ENCODE measurements at regions of chr22 and their contacts with region 1.

Region 1: DNA sequence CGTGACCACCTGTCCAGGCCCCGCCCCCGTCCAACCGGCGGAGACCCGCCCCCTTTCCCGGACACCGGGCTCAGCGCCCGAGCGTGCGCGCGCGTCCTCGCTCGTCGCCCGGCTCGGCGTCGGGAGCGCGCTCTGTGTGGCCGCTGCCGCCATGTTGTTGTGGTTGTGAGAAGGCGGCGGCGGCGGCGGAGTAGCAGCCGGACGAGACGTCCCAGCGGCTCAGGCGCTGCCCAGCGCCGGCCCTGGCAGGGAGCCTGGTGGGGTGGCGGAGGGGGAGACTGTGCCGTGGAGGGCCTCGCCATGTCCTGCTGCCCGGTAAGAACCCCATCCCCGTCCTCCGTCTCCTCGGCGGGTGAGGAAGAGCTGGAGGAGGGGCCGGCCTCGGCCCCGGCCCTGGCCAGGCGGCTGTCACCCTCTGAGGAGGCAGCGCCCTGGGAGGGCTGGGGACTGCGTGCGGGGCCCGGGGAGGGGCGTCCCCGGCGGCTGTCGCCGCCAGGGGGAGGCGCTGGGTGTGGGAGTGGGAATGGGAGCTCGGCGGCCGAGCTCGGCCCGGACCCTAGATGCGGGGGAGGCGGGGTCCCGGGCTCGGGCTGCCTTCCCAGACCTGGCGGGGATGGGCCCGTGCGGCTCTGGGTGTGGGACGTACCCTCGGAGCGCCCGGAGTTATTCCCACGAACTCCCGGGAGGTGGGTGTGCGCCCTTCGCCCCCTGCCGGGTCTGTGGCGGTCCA is at the start of gene MTMR3:
- DNase-seq: peak; percentile 92 to 98 (median 97)
- H3K4me3 ChIP-seq: peak within 1 kb of the TSS; percentile 71
- H3K27ac ChIP-seq: peak within 1 kb of the TSS; percentile 96 to 98
- H3K4me1 ChIP-seq: peaks cover 14% of the 10 kb centered on the region
- H3K27me3 ChIP-seq: no peaks in the 10 kb centered on the region
- CTCF ChIP-seq: peak in 2 of 3 donors; percentile 51 to 54
- EP300 ChIP-seq: no peak
- POLR2A ChIP-seq: peak; percentile 64
- total RNA-seq, gene MTMR3: 45.4 to 66.2 (median 48.3) TPM

Region 2: GRCh38 chr22:29837780-29838598 is 45.2 kb before region 1 on chr22 and contains the start of gene ASCC2:
- intact Hi-C with region 1: no loop called
- DNase-seq: peak; percentile 97 to 99 (median 98)
- H3K4me3 ChIP-seq: peak within 1 kb of the TSS; percentile 66
- H3K27ac ChIP-seq: peak within 1 kb of the TSS in 1 of 2 donors; percentile 64
- H3K4me1 ChIP-seq: peaks cover 2% of the 10 kb centered on the region
- H3K27me3 ChIP-seq: no peaks in the 10 kb centered on the region
- CTCF ChIP-seq: no peak
- EP300 ChIP-seq: no peak
- POLR2A ChIP-seq: peak; percentile 38
- total RNA-seq, gene ASCC2: 26.9 to 55.6 (median 36.9) TPM

Region 3: GRCh38 chr22:29994027-29994715 is 111.0 kb after region 1 on chr22:
- intact Hi-C with region 1: loop called in 1 of 4 experiments (anchors 10 kb)
- DNase-seq: no peak
- H3K4me3 ChIP-seq: no peak overlapping the region
- H3K27ac ChIP-seq: no peak overlapping the region
- H3K4me1 ChIP-seq: peaks cover 7% of the 10 kb centered on the region
- H3K27me3 ChIP-seq: no peaks in the 10 kb centered on the region
- CTCF ChIP-seq: no peak
- EP300 ChIP-seq: no peak
- POLR2A ChIP-seq: no peak

Region 4: DNA sequence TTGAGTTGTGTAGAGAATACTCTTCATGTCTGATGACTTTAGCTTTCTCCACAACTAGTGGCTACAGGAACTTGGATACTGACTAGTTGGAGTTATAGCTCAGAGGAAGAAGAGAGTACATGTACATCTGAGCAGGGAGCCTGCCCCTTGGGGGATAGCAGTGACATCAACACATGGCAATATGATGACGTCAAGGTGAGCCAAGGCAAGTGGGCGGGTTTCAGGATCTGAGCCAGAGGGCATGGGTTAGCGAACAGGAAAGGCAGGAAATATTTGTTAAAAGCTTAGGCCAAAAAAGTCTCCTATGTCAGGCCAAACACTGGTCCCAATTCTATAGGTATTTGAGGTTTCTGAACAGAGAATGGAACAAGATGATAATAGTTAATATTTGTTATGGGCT is 155.0 kb after region 1 on chr22:
- intact Hi-C with region 1: no loop called
- DNase-seq: no peak
- H3K4me3 ChIP-seq: no peak overlapping the region
- H3K27ac ChIP-seq: no peak overlapping the region
- H3K4me1 ChIP-seq: no peaks in the 10 kb centered on the region
- H3K27me3 ChIP-seq: no peaks in the 10 kb centered on the region
- CTCF ChIP-seq: no peak
- EP300 ChIP-seq: no peak
- POLR2A ChIP-seq: no peak